Caco-2 (cell line): ENCODE measurements at regions of chr11 and their contacts with region 1.

Region 1: GRCh38 chr11:20035701-20036620 is 124.3 kb downstream of the DBX1 start:
- DNase-seq: no peak
- H3K4me3 ChIP-seq: no peak overlapping the region
- H3K4me3 Mint-ChIP-seq: no peak overlapping the region
- H3K27ac Mint-ChIP-seq: peak overlapping the region; percentile 91
- H3K4me1 ChIP-seq: peaks cover 85% of the 10 kb centered on the region
- H3K4me1 Mint-ChIP-seq: peaks cover 70% of the 10 kb centered on the region
- H3K27me3 ChIP-seq: no peaks in the 10 kb centered on the region
- H3K27me3 Mint-ChIP-seq: no peaks in the 10 kb centered on the region
- CTCF ChIP-seq: no peak

Region 2: GRCh38 chr11:19978668-19979518 is 57.1 kb before region 1 on chr11:
- CTCF ChIA-PET with region 1: interaction called, 3 read pairs
- POLR2A ChIA-PET with region 1: no interaction called
- intact Hi-C with region 1: loop called (anchors 1 kb)
- DNase-seq: peak; percentile 63 to 74
- H3K4me3 ChIP-seq: no peak overlapping the region
- H3K4me3 Mint-ChIP-seq: peak overlapping the region; percentile 48
- H3K27ac Mint-ChIP-seq: peak overlapping the region; percentile 96
- H3K4me1 ChIP-seq: peaks cover 53% of the 10 kb centered on the region
- H3K4me1 Mint-ChIP-seq: peaks cover 52% of the 10 kb centered on the region
- H3K27me3 ChIP-seq: no peaks in the 10 kb centered on the region
- H3K27me3 Mint-ChIP-seq: no peaks in the 10 kb centered on the region
- CTCF ChIP-seq: no peak

Region 3: DNA sequence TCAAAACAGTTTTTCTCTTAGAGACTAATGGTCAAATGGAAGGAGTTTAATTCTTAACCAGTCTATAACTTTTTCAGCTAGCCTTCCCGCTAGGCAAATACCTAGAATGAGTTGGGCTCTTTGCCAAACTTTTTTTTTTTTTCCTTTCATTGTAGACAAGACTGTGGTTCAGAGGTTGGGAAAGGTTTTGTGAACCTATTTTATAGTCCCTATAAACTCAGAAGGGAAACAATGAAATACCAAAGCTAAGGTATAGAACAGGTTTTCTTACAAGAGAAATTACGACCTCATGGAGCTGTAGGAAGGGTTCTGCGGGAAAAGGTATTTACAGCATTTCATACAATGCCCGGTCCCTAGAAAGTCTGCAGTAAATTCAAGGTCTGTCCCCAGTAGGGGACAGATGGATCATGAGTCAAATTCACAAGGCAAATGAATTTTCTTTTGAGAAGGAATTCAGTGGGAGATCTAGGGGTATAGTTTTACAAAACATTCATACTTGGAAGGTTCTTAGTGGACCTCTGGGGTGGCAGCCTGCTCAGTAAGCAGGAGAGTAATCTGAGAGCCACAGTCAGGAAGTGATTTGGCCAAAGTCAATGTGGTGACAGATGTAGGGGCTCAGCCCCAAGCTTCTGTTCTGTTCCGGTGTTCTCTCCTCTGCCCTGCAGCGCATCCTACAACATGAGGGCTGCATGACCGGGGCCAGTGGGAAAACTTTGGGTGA is 22.5 kb before region 1 on chr11:
- CTCF ChIA-PET with region 1: interaction called, 7 read pairs
- POLR2A ChIA-PET with region 1: interaction called, 3 read pairs
- intact Hi-C with region 1: loop called (anchors 1 kb)
- DNase-seq: peak; percentile 50 to 53
- H3K4me3 ChIP-seq: no peak overlapping the region
- H3K4me3 Mint-ChIP-seq: peak overlapping the region; percentile 4
- H3K27ac Mint-ChIP-seq: peak overlapping the region; percentile 73
- H3K4me1 ChIP-seq: peaks cover 43% of the 10 kb centered on the region
- H3K4me1 Mint-ChIP-seq: peaks cover 25% of the 10 kb centered on the region
- H3K27me3 ChIP-seq: no peaks in the 10 kb centered on the region
- H3K27me3 Mint-ChIP-seq: no peaks in the 10 kb centered on the region
- CTCF ChIP-seq: peak in 1 of 2 experiments; percentile 23